GM10248 (cell line): ENCODE measurements at regions of chr3 and their contacts with region 1.

Region 1: GRCh38 chr3:72665701-72666443 is 182.4 kb downstream of the SHQ1 start:
- DNase-seq: peak; percentile 61
- CTCF ChIP-seq: peak; percentile 35

Region 2: GRCh38 chr3:72549761-72550581 is 115.9 kb before region 1 on chr3:
- CTCF ChIA-PET with region 1: no interaction called
- POLR2A ChIA-PET with region 1: no interaction called
- DNase-seq: peak; percentile 37
- CTCF ChIP-seq: no peak

Region 3: DNA sequence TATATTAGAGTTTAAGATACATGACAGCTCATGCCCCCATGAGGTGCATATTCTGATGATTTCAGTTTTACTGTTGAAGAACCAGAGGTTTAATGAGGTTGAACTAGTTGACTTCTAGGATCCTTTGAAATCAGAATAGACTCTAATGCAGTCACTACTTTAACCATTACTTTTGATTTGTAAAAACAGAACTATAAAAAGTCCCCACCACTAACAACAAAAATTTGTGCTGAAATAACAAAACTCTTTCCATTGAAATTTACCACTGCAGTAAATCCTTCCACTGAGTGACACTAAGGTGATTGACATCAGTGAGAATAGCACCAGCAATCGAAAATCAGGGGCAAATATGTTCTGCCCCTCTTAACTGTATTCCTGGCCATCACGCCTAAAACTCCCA is 31.7 kb before region 1 on chr3:
- CTCF ChIA-PET with region 1: interaction called, 31 read pairs
- POLR2A ChIA-PET with region 1: no interaction called
- DNase-seq: peak; percentile 43
- CTCF ChIP-seq: no peak

Region 4: GRCh38 chr3:72652395-72652794 is 13.5 kb before region 1 on chr3:
- CTCF ChIA-PET with region 1: interaction called, 38 read pairs
- POLR2A ChIA-PET with region 1: no interaction called
- DNase-seq: no peak
- CTCF ChIP-seq: no peak

Region 5: GRCh38 chr3:72694398-72694797 is 28.5 kb after region 1 on chr3:
- CTCF ChIA-PET with region 1: interaction called, 51 read pairs
- POLR2A ChIA-PET with region 1: no interaction called
- DNase-seq: no peak
- CTCF ChIP-seq: no peak

Region 6: GRCh38 chr3:72738752-72739530 is 73.1 kb after region 1 on chr3:
- CTCF ChIA-PET with region 1: interaction called, 13 read pairs
- POLR2A ChIA-PET with region 1: no interaction called
- DNase-seq: peak; percentile 90
- CTCF ChIP-seq: no peak

Region 7: DNA sequence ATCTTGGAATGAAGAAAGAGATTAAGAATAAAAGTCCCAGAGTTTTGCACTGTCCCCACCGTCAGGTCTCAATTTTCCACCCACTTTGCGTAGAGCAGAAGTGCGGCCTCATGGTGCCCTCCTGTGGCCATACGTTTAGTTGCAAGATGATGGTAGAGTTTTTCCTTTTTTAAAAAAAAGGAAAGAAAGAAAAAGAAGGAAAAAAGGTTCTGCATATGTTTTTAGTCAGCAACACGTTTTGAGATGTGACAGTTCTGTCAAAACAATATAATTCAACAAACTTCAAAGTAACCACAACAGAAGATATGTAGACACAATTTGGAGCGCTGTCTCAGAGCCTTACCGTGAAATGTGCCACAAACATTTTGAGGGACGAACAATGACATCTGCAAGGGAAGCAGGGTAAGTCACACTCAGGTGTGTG is 420.2 kb after region 1 on chr3:
- CTCF ChIA-PET with region 1: interaction called, 10 read pairs
- POLR2A ChIA-PET with region 1: no interaction called
- DNase-seq: peak; percentile 46
- CTCF ChIP-seq: peak; percentile 84